Caco-2 (cell line): ENCODE measurements at regions of chr11 and their contacts with region 1.

Region 1: GRCh38 chr11:119101759-119102423 is at the start of gene DPAGT1:
- DNase-seq: peak; percentile 97 to 99
- H3K4me3 ChIP-seq: peak within 1 kb of the TSS; percentile 43
- H3K4me3 Mint-ChIP-seq: peak within 1 kb of the TSS; percentile 85
- H3K27ac Mint-ChIP-seq: peak within 1 kb of the TSS; percentile 98
- H3K4me1 ChIP-seq: peaks cover 24% of the 10 kb centered on the region
- H3K4me1 Mint-ChIP-seq: peaks cover 29% of the 10 kb centered on the region
- H3K27me3 ChIP-seq: no peaks in the 10 kb centered on the region
- H3K27me3 Mint-ChIP-seq: no peaks in the 10 kb centered on the region
- CTCF ChIP-seq: peak in 1 of 2 experiments; percentile 8
- total RNA-seq, gene DPAGT1: 117 and 119 TPM in 2 replicates

Region 2: GRCh38 chr11:119084663-119085436 is 17.0 kb before region 1 on chr11 and contains the start of gene HMBS:
- CTCF ChIA-PET with region 1: interaction called, 14 read pairs
- POLR2A ChIA-PET with region 1: interaction called, 38 read pairs
- intact Hi-C with region 1: loop called (anchors 2 kb)
- DNase-seq: peak; percentile 97 to 98
- H3K4me3 ChIP-seq: peak within 1 kb of the TSS; percentile 85
- H3K4me3 Mint-ChIP-seq: peak within 1 kb of the TSS; percentile 97
- H3K27ac Mint-ChIP-seq: peak within 1 kb of the TSS; percentile 98
- H3K4me1 ChIP-seq: peaks cover 11% of the 10 kb centered on the region
- H3K4me1 Mint-ChIP-seq: peaks cover 1% of the 10 kb centered on the region
- H3K27me3 ChIP-seq: no peaks in the 10 kb centered on the region
- H3K27me3 Mint-ChIP-seq: no peaks in the 10 kb centered on the region
- CTCF ChIP-seq: no peak
- total RNA-seq, gene HMBS: 94.9 and 95.7 TPM in 2 replicates

Region 3: DNA sequence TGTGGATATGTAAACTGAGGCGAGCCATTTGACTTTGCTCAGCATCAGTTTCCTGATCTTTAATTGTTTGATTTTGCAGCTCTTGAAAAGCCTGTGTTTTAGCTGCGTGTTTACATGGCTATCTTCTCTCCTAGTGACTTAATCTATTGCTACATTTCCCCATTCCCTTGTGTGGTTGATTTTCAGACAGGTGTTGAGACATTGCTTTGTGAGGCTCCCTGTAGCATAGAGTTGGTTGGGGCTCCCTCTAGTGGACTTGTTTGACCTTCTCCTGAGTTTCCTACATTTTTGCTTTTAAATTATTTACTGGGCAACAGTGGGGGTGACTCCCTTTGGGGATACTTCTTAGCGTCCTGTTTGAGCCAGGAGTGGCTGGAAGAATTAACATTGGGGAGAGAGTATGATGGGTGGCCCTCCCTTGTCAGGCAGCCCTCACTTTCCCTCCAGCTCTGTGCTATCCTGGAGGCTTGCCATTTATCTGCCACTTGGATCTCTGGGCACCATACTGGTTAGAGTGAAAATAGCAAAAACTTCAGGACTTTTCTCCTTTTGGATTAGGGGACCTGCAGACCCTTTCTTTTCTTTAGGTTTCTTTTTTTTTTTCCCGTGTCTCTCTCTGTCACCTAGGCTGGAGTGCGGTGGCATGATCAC is 95.1 kb after region 1 on chr11:
- CTCF ChIA-PET with region 1: interaction called, 27 read pairs
- POLR2A ChIA-PET with region 1: interaction called, 6 read pairs
- intact Hi-C with region 1: loop called (anchors 1 kb)
- DNase-seq: peak; percentile 86 to 92
- H3K4me3 ChIP-seq: no peak overlapping the region
- H3K4me3 Mint-ChIP-seq: no peak overlapping the region
- H3K27ac Mint-ChIP-seq: peak overlapping the region; percentile 15
- H3K4me1 ChIP-seq: peaks cover 10% of the 10 kb centered on the region
- H3K4me1 Mint-ChIP-seq: peaks cover 10% of the 10 kb centered on the region
- H3K27me3 ChIP-seq: no peaks in the 10 kb centered on the region
- H3K27me3 Mint-ChIP-seq: peaks cover 2% of the 10 kb centered on the region
- CTCF ChIP-seq: peak; percentile 93 to 96

Region 4: GRCh38 chr11:119249671-119250010 is 147.8 kb after region 1 on chr11:
- CTCF ChIA-PET with region 1: no interaction called
- POLR2A ChIA-PET with region 1: interaction called, 13 read pairs
- intact Hi-C with region 1: no loop called
- DNase-seq: no peak
- H3K4me3 ChIP-seq: no peak overlapping the region
- H3K4me3 Mint-ChIP-seq: no peak overlapping the region
- H3K27ac Mint-ChIP-seq: no peak overlapping the region
- H3K4me1 ChIP-seq: peaks cover 10% of the 10 kb centered on the region
- H3K4me1 Mint-ChIP-seq: peaks cover 6% of the 10 kb centered on the region
- H3K27me3 ChIP-seq: no peaks in the 10 kb centered on the region
- H3K27me3 Mint-ChIP-seq: no peaks in the 10 kb centered on the region
- CTCF ChIP-seq: no peak